Natural killer cell (primary cell): ENCODE measurements at regions of chr14 and their contacts with region 1.

Region 1: GRCh38 chr14:50060871-50061663 is 55.3 kb downstream of the VCPKMT start:
- DNase-seq: peak; percentile 56 to 72
- ATAC-seq: peak; percentile 31 to 46 (median 35)
- H3K4me3 ChIP-seq: no peak overlapping the region
- H3K4me3 Mint-ChIP-seq: peak overlapping the region; percentile 82
- H3K27ac ChIP-seq: peak overlapping the region; percentile 92
- H3K27ac Mint-ChIP-seq: peak overlapping the region; percentile 93 to 95
- H3K4me1 ChIP-seq: peaks cover 81% of the 10 kb centered on the region
- H3K4me1 Mint-ChIP-seq: peaks cover 76 to 83% of the 10 kb centered on the region in 2 donors
- H3K27me3 ChIP-seq: no peaks in the 10 kb centered on the region
- H3K27me3 Mint-ChIP-seq: no peaks in the 10 kb centered on the region
- CTCF ChIP-seq: no peak

Region 2: GRCh38 chr14:49867831-49868723 is 193.0 kb before region 1 on chr14:
- intact Hi-C with region 1: loop called (anchors 1 kb)
- DNase-seq: peak; percentile 94 to 98
- ATAC-seq: peak; percentile 86 to 97 (median 92)
- H3K4me3 ChIP-seq: peak overlapping the region; percentile 48
- H3K4me3 Mint-ChIP-seq: peak overlapping the region; percentile 92
- H3K27ac ChIP-seq: peak overlapping the region; percentile 93
- H3K27ac Mint-ChIP-seq: peak overlapping the region; percentile 94 to 100
- H3K4me1 ChIP-seq: peaks cover 33% of the 10 kb centered on the region
- H3K4me1 Mint-ChIP-seq: peaks cover 15 to 18% of the 10 kb centered on the region in 2 donors
- H3K27me3 ChIP-seq: no peaks in the 10 kb centered on the region
- H3K27me3 Mint-ChIP-seq: no peaks in the 10 kb centered on the region
- CTCF ChIP-seq: no peak

Region 3: GRCh38 chr14:49900973-49901372 is 160.1 kb before region 1 on chr14:
- intact Hi-C with region 1: no loop called
- DNase-seq: no peak
- ATAC-seq: no peak
- H3K4me3 ChIP-seq: no peak overlapping the region
- H3K4me3 Mint-ChIP-seq: no peak overlapping the region
- H3K27ac ChIP-seq: no peak overlapping the region
- H3K27ac Mint-ChIP-seq: no peak overlapping the region
- H3K4me1 ChIP-seq: peaks cover 7% of the 10 kb centered on the region
- H3K4me1 Mint-ChIP-seq: peaks cover 36 to 43% of the 10 kb centered on the region in 2 donors
- H3K27me3 ChIP-seq: no peaks in the 10 kb centered on the region
- H3K27me3 Mint-ChIP-seq: no peaks in the 10 kb centered on the region
- CTCF ChIP-seq: no peak

Region 4: DNA sequence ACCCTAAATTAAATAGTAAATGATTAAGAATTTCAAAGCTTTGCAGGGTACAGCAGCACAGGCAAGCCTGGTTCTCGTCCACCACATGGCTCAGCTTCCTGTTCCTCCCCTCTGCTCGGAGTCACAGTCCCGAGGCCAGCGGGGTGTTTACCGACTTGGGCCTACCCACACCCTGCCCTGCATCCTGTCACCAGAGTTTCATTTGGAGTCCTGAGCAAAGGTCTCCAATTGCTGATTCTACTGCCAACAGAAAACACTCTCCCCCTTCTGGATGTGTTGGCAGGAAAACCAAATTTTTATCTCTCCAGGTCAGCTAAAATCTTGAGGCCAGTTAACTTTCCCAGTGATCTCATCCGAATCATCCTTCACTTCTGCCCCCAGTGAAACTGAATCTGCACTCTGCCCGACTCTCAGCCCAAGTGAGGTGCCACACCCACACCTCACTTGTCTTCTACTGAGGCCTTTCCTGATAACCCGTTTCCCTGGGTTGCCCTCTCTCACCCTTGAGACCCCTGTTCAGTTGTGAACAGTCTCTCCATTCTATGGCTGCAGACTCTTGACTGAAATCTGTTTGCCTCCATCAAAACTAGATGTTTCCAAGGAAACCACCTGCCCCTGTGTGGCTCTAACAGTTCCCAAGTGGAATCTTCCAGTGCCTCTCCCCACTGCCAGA is 15.9 kb before region 1 on chr14:
- intact Hi-C with region 1: loop called (anchors 1 kb)
- DNase-seq: peak; percentile 65 to 80
- ATAC-seq: peak; percentile 83 to 89 (median 88)
- H3K4me3 ChIP-seq: no peak overlapping the region
- H3K4me3 Mint-ChIP-seq: peak overlapping the region; percentile 63
- H3K27ac ChIP-seq: peak overlapping the region; percentile 89
- H3K27ac Mint-ChIP-seq: peak overlapping the region; percentile 96 to 99
- H3K4me1 ChIP-seq: peaks cover 75% of the 10 kb centered on the region
- H3K4me1 Mint-ChIP-seq: peaks cover 62 to 66% of the 10 kb centered on the region in 2 donors
- H3K27me3 ChIP-seq: no peaks in the 10 kb centered on the region
- H3K27me3 Mint-ChIP-seq: no peaks in the 10 kb centered on the region
- CTCF ChIP-seq: no peak

Region 5: DNA sequence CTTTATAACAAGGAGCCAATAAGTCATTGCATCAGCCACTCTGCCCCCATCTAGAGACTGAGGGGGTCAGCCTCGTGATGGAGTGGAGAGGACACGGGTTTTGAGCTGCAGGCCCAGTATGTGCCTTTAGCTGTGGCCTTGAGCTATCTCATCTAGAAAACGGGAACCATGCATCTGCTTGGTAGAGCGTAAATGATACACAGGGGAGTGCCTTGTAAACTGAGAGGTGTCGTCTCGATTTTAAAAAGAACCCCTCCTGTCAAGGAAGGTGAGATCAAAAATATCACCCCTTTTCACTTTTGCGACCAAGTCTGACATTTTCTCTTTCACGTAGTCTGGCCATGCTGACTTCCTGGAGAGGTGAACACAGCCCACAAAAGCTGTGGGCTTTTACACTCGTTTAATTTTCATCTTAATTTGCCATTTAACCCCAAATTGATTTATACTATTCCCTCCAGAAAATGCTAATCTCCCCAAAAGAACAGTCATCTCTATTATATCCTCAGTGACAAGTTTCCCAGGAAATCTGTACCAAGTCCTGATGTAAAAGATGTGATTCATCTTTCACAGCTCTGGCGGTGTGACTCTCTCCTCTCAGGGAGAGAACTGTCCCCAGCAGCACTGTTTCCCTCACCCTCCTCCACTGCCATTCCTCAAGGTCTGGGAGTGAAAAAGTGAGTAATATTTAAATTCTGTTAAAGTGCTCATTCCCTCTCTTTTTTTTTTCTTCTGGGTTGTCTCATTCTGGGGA is 24.7 kb after region 1 on chr14:
- intact Hi-C with region 1: loop called (anchors 1 kb)
- DNase-seq: peak; percentile 36 to 70
- ATAC-seq: peak; percentile 53 to 66 (median 56)
- H3K4me3 ChIP-seq: no peak overlapping the region
- H3K4me3 Mint-ChIP-seq: peak overlapping the region; percentile 14
- H3K27ac ChIP-seq: peak overlapping the region; percentile 95
- H3K27ac Mint-ChIP-seq: peak overlapping the region; percentile 86 to 87
- H3K4me1 ChIP-seq: peaks cover 72% of the 10 kb centered on the region
- H3K4me1 Mint-ChIP-seq: peaks cover 62 to 66% of the 10 kb centered on the region in 2 donors
- H3K27me3 ChIP-seq: no peaks in the 10 kb centered on the region
- H3K27me3 Mint-ChIP-seq: no peaks in the 10 kb centered on the region
- CTCF ChIP-seq: no peak